ENCODE measurements at regions of chr6 and their contacts with region 1.

Region 1: DNA sequence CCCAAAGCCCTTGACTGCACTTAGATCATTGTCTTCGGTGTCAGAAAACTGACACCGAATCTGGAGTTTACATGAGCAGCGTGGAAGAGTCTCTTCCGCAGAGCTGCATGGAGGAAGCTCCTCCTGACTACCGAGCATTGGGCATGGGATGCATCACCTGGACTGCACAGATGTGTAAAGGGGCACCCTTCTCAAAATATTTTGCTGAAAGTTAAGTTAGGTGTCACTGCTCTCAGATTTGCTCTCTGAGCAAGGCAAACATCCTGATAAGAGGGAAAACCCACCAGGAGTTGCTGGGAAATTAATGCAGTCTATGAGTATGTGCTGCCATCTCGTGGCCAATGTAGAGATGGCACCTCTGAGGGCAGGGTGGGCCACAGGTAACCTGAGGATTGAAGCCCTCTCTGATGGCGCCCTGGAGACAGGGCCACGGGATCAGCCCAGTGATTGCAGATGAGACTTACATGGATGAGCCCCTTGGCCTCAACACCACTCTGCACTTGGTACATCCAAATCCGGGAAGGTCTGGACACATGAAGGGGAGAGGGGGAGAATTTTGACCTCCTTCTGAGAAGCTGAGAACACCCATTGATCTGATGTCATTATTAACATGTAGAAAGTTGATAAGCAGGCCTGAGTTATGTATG is 129.9 kb downstream of the LPA start:
- DNase-seq: peak; percentile 31 to 67 (median 34)
- ATAC-seq: peak; percentile 42 to 68 (median 56)
- H3K4me3 ChIP-seq: peak overlapping the region in 5 of 12 donors; percentile 8 to 42 (median 11)
- H3K27ac ChIP-seq: no peak overlapping the region
- H3K4me1 ChIP-seq: peaks cover 0 to 6% (median 0%) of the 10 kb centered on the region in 12 donors
- H3K27me3 ChIP-seq: peaks cover 0 to 4% (median 0%) of the 10 kb centered on the region in 9 donors
- CTCF ChIP-seq: peak; percentile 80 to 96 (median 90)
- POLR2A ChIP-seq: no peak

Region 2: DNA sequence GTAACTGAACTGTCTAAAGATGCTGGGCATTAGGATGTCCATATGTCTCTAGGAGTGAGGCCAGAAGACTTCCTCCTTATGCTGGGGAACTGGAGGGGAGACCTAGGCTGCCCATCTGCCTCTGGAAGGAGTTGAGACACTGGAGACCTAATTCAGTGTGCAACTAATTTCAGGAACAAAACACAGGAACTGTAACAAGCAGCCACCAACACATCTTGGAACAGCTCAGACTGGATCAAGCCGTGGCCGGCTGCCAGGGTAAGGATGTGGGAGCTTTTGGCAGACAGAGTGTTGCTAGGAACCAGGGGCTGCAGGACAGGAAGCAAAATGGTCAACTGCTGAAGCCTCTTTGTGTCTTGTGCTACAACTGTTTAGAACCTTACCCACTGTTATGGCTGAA is 659.7 kb before region 1 on chr6:
- intact Hi-C with region 1: loop called in 7 of 10 experiments (anchors 10 kb)
- DNase-seq: peak; percentile 51 to 80 (median 57)
- ATAC-seq: peak in 3 of 4 donors; percentile 44 to 71 (median 63)
- H3K4me3 ChIP-seq: no peak overlapping the region
- H3K27ac ChIP-seq: no peak overlapping the region
- H3K4me1 ChIP-seq: peaks cover 0 to 8% (median 0%) of the 10 kb centered on the region in 12 donors
- H3K27me3 ChIP-seq: no peaks in the 10 kb centered on the region
- CTCF ChIP-seq: no peak
- POLR2A ChIP-seq: no peak

Region 3: DNA sequence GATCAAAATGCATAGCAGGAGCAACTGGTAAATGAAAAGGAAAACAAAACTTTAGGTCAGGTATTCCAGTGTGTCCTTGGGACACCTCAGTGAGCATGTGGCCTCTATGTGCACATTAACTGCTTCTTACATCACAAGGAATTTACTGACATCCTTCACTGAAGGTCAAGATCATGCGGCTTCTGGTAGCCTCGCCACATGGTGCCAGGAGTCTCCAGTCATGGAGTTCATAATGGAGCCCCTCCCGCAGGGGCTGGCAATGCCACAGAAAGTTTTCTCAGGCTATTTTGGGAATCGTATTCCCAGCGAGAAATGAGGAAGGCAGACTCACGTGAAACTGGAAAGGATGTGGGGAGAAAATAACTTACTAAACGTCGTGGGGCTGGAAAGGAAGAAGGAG is 205.7 kb before region 1 on chr6:
- intact Hi-C with region 1: no loop called
- DNase-seq: no peak
- ATAC-seq: no peak
- H3K4me3 ChIP-seq: no peak overlapping the region
- H3K27ac ChIP-seq: no peak overlapping the region
- H3K4me1 ChIP-seq: no peaks in the 10 kb centered on the region
- H3K27me3 ChIP-seq: peaks cover 0 to 5% (median 0%) of the 10 kb centered on the region in 9 donors
- CTCF ChIP-seq: no peak
- POLR2A ChIP-seq: no peak

Region 4: DNA sequence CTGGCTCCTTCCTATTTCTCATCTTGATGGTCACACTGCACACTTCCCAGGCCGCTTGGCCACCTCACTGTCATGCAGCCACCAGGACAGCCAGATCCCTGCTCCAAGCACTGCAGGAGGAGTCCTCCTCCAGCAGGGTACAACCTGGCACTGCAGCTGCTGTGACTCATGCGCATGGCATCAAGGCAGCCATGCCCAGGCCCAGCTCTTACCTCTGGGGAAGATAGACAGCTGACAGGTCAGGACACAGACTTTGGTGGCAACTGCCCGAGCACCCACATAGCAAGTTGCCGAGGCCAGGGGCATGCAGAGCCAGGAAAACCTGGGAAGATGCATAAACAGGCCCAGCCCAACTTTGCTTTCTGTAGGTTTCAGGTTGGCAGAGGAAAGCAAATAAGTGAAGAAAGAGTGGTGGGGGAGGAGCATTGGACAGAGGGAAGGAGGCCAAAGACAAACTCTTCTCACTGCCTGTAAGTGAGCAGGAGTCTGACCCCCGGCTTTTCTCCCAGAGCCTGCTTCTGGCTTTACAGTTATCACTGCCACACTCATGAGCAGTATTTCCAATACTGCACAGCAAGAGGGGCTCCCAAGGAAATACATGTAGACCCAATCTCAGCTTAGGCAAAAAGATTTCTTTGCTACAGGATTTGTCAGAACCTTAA is 147.2 kb before region 1 on chr6:
- intact Hi-C with region 1: no loop called
- DNase-seq: peak in 2 of 5 donors; percentile 38 to 46
- ATAC-seq: peak; percentile 55 to 88 (median 80)
- H3K4me3 ChIP-seq: no peak overlapping the region
- H3K27ac ChIP-seq: peak overlapping the region in 3 of 12 donors; percentile 8 to 68 (median 30)
- H3K4me1 ChIP-seq: peaks cover 0 to 8% (median 0%) of the 10 kb centered on the region in 12 donors
- H3K27me3 ChIP-seq: no peaks in the 10 kb centered on the region
- CTCF ChIP-seq: peak in 2 of 12 donors; percentile 13 to 18
- POLR2A ChIP-seq: no peak

Region 5: DNA sequence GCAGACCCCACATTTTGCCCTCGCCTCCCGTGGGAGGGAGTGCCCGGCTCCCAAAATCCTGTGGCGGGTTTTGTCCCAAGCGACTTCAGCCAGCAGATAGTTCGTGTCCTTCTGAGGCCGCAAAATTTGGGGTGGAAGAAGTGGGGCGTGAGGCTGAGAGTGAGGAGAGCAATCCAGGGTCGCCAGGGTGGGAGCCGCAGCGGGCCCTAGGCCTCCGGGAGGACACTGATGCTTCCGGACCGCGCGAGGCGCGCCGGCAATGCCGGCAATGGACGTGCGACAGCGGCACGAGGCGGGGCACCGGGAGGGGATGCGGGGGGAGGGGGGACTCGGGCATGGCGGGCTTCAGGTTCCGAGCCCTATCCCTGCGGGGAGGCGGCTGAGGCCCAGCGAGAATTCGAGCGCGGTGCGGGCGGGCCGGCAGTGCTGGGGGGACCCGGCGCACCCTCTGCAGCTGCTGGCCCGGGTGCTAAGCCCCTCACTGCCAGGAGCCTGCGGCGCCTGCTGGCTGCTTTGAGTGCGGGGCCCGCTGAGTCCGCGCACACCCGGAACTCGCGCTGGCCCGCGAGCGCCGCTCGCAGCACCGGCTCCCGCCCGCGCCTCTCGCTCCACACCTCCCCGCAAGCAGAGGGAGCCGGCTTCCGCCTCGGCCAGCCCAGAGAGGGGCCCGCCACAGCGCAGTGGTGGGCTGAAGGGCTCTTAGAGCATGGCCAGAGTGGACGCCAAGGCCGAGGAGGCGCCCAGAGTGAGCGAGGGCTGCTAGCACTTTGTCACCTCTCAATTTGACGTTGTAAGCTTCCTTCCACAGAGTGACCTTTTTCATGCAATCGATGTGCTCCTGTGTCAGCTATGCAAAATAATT is 13.9 kb before region 1 on chr6:
- intact Hi-C with region 1: loop called in 4 of 10 experiments (anchors 1 kb)
- DNase-seq: peak; percentile 48 to 87 (median 76)
- ATAC-seq: peak; percentile 86 to 96 (median 94)
- H3K4me3 ChIP-seq: peak overlapping the region; percentile 58 to 78 (median 71)
- H3K27ac ChIP-seq: peak overlapping the region in 11 of 12 donors; percentile 26 to 80 (median 44)
- H3K4me1 ChIP-seq: peaks cover 0 to 14% (median 0%) of the 10 kb centered on the region in 12 donors
- H3K27me3 ChIP-seq: peaks cover 0 to 8% (median 0%) of the 10 kb centered on the region in 9 donors
- CTCF ChIP-seq: peak in 5 of 12 donors; percentile 11 to 94 (median 93)
- POLR2A ChIP-seq: no peak

Region 6: GRCh38 chr6:161029195-161029809 is 495.1 kb after region 1 on chr6:
- intact Hi-C with region 1: no loop called
- DNase-seq: no peak
- ATAC-seq: no peak
- H3K4me3 ChIP-seq: no peak overlapping the region
- H3K27ac ChIP-seq: no peak overlapping the region
- H3K4me1 ChIP-seq: peaks cover 0 to 21% (median 5%) of the 10 kb centered on the region in 12 donors
- H3K27me3 ChIP-seq: no peaks in the 10 kb centered on the region
- CTCF ChIP-seq: no peak
- POLR2A ChIP-seq: no peak